K562 (cell line): ENCODE measurements at regions of chr15 and their contacts with region 1.

Region 1: GRCh38 chr15:34241372-34242330 is 16.8 kb downstream of the EMC4 start:
- DNase-seq: peak; percentile 37 to 50 (median 42)
- ATAC-seq: peak; percentile 86
- H3K4me3 ChIP-seq: no peak overlapping the region
- H3K27ac ChIP-seq: no peak overlapping the region
- H3K4me1 ChIP-seq: no peaks in the 10 kb centered on the region
- H3K27me3 ChIP-seq: no peaks in the 10 kb centered on the region
- CTCF ChIP-seq: peak; percentile 46 to 76 (median 64); a peak in 5 of 6 replicates
- EP300 ChIP-seq: no peak
- POLR2A ChIP-seq: no peak
- RAD21 ChIP-seq: peak; percentile 63 to 65

Region 2: DNA sequence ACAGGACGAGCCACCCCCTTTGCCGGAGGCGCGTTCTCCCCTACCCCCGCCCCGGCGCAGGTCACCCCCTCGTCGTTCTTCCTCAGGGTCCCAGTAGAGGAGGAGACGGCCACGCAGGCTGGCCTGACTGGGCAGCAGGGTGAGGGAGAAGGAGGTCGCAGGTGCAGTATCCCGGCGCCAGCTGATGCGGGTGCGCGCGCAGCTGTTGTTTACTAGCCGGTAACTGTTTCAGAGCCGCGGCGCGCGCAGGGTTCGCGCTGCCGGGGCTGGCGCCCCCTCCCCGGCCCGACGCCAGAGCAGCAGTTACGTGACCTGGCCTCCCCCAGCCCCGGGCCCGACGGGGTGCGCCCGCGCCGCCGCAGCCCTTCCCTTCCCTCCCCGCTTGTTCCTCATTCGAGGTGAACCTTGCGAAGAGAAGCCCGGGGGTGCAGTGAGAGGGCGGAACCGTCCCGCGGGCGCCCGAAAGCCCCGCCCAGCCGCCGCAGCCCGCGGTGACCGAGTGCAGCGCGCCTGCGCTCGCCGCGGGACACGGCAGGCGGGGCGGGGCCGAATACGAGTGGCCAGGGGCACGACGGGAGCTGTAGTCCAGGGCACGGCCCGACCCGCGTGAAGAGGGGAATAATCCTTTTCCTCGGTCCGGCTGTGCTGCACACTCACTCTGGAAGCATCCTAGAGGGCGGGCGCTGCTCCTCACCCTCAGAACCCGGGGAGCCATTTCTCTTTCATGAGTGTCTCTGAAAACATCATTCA is 96.1 kb after region 1 on chr15 and contains the start of gene SLC12A6:
- CTCF ChIA-PET with region 1: no interaction called
- POLR2A ChIA-PET with region 1: no interaction called
- in situ Hi-C with region 1: no loop called
- intact Hi-C with region 1: loop called (anchors 5 kb)
- DNase-seq: peak; percentile 93 to 95 (median 94)
- ATAC-seq: peak; percentile 97
- H3K4me3 ChIP-seq: peak within 1 kb of the TSS; percentile 79
- H3K27ac ChIP-seq: peak within 1 kb of the TSS; percentile 77
- H3K4me1 ChIP-seq: peaks cover 27 to 37% of the 10 kb centered on the region in 2 experiments
- H3K27me3 ChIP-seq: no peaks in the 10 kb centered on the region
- CTCF ChIP-seq: no peak
- EP300 ChIP-seq: no peak
- POLR2A ChIP-seq: peak; percentile 56; the same call in 1 of the 2 replicates
- RAD21 ChIP-seq: no peak
- polyA plus RNA-seq, gene SLC12A6: 1.4 to 2.2 TPM